CD4-positive, alpha-beta T cell (primary cell): ENCODE measurements at regions of chr17 and their contacts with region 1.

Region 1: GRCh38 chr17:75430159-75430974 is 24.9 kb upstream of the GRB2 start:
- DNase-seq: no peak
- ATAC-seq: no peak
- H3K4me3 ChIP-seq: no peak overlapping the region
- H3K4me3 Mint-ChIP-seq: no peak overlapping the region
- H3K27ac ChIP-seq: no peak overlapping the region
- H3K27ac Mint-ChIP-seq: no peak overlapping the region
- H3K4me1 ChIP-seq: peaks cover 12% of the 10 kb centered on the region
- H3K4me1 Mint-ChIP-seq: peaks cover 16% of the 10 kb centered on the region
- H3K27me3 ChIP-seq: no peaks in the 10 kb centered on the region
- H3K27me3 Mint-ChIP-seq: peaks cover 6% of the 10 kb centered on the region
- CTCF ChIP-seq: no peak

Region 2: DNA sequence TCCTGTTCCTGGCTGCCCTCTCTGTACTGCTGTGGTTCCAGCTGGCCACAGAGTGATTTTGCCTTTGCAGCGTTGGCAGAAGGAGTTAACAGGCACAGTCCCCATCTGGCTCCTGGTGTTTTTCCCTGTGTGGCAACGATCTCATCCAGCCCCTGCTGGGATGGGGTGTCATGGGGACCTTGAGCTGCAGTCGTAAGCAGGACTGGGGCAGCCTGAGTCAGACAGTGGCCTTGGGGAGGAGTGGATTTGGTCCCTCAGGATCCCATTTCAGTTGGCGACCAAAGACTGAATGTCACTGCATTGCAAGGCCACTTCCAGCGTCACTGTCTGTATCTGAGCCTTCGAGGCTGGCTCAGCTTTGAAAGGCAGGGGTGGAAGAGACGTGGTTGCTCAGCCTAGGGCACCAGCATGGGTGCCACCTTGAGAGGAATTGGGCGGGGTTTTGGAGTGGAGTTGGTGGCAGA is 38.0 kb after region 1 on chr17:
- CTCF ChIA-PET with region 1: no interaction called
- POLR2A ChIA-PET with region 1: no interaction called
- intact Hi-C with region 1: no loop called
- DNase-seq: no peak
- ATAC-seq: no peak
- H3K4me3 ChIP-seq: no peak overlapping the region
- H3K4me3 Mint-ChIP-seq: no peak overlapping the region
- H3K27ac ChIP-seq: no peak overlapping the region
- H3K27ac Mint-ChIP-seq: no peak overlapping the region
- H3K4me1 ChIP-seq: no peaks in the 10 kb centered on the region
- H3K4me1 Mint-ChIP-seq: peaks cover 9% of the 10 kb centered on the region
- H3K27me3 ChIP-seq: no peaks in the 10 kb centered on the region
- H3K27me3 Mint-ChIP-seq: no peaks in the 10 kb centered on the region
- CTCF ChIP-seq: no peak

Region 3: GRCh38 chr17:75524953-75525719 is 94.8 kb after region 1 on chr17 and contains the start of gene LLGL2:
- CTCF ChIA-PET with region 1: no interaction called
- POLR2A ChIA-PET with region 1: no interaction called
- intact Hi-C with region 1: no loop called
- DNase-seq: peak; percentile 68 to 96 (median 84)
- ATAC-seq: peak; percentile 91
- H3K4me3 ChIP-seq: peak within 1 kb of the TSS; percentile 64
- H3K4me3 Mint-ChIP-seq: peak within 1 kb of the TSS; percentile 82
- H3K27ac ChIP-seq: no peak within 1 kb of the TSS
- H3K27ac Mint-ChIP-seq: no peak within 1 kb of the TSS
- H3K4me1 ChIP-seq: peaks cover 28% of the 10 kb centered on the region
- H3K4me1 Mint-ChIP-seq: peaks cover 24% of the 10 kb centered on the region
- H3K27me3 ChIP-seq: no peaks in the 10 kb centered on the region
- H3K27me3 Mint-ChIP-seq: no peaks in the 10 kb centered on the region
- CTCF ChIP-seq: peak; percentile 44
- total RNA-seq, gene LLGL2: 31.2 to 34.2 TPM

Region 4: DNA sequence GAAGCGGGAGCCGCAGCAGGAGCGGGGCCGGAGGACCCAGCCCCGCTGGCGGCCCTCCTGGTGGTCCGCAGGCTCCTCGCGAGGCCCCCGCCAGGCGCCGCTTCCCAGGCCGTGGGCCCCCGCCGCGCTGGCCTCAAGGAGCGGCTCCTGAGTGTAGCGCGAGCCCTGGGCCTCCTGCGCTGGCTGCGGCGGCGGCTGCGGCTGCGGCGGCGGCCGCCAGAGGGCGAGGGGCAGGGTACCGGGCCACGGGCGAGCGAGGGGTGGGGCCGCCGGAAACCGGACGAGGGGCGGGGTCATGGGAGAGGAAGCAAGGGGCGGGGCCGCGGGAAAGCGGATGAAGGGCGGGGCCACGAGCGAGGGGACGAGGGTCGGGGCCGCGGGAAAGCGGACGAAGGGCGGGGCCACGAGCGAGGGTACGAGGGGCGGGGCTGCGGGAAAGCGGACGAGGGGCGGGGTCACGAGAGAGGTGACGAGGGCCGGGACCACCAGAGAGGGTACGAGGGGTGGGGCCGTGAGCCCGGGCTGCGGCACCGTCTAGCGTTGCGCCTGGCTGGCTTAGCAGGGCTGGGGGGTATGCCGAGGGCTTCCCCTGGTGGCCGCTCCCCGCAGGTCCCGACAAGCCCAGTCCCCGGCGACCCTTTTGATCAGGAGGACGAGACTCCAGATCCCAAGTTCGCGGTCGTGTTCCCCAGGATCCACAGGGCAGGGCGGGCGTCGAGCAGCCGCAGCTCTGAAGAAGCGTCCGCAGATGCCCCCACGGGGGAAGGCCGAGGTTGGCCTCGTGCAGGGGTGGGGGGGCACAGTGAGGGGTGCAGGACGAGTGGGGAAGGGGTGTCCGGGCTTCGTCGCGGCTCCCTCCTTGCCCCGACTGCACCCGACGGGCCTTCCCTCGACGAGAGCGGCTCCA is 158.9 kb after region 1 on chr17:
- CTCF ChIA-PET with region 1: no interaction called
- POLR2A ChIA-PET with region 1: interaction called, 3 read pairs
- intact Hi-C with region 1: loop called (anchors 2 kb)
- DNase-seq: peak; percentile 91 to 99 (median 96)
- ATAC-seq: peak; percentile 88
- H3K4me3 ChIP-seq: peak overlapping the region; percentile 66
- H3K4me3 Mint-ChIP-seq: peak overlapping the region; percentile 81
- H3K27ac ChIP-seq: peak overlapping the region in 1 of 2 donors; percentile 56
- H3K27ac Mint-ChIP-seq: no peak overlapping the region
- H3K4me1 ChIP-seq: peaks cover 32% of the 10 kb centered on the region
- H3K4me1 Mint-ChIP-seq: peaks cover 11% of the 10 kb centered on the region
- H3K27me3 ChIP-seq: no peaks in the 10 kb centered on the region
- H3K27me3 Mint-ChIP-seq: no peaks in the 10 kb centered on the region
- CTCF ChIP-seq: peak; percentile 57

Region 5: DNA sequence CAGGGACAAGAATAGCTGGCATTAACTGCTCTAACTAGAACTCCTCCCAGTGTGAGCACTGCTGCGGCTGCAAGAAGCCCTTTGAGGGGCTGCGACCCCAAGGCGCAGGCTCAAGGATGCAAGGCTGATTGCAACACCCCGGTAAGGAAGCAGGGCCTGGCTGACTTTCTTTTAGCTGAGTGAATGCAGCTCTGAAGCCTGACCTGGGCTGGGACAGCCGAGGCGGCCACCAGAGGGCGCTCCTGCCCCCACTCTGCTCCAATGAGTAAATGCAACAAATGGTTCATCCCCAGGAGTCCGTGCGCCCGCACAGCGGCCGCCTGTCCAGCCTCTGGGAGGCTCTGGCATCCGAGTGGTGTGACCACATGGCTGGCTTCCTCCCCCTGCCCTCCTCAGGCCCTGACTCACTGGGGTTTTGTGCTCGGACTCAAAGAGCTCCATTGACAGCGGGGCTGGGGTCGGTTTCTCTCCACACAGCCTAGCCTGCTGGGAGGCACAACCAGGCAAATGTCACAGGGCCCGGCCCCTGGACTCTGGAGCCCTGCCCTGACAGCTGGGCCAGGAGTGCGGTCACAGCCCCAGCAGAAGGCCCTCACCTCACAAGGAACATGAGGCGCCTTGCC is 202.6 kb after region 1 on chr17 and contains the start of gene SMIM5:
- CTCF ChIA-PET with region 1: interaction called, 7 read pairs
- POLR2A ChIA-PET with region 1: no interaction called
- intact Hi-C with region 1: loop called (anchors 1 kb)
- DNase-seq: peak; percentile 71 to 91 (median 80)
- ATAC-seq: peak; percentile 86
- H3K4me3 ChIP-seq: no peak within 1 kb of the TSS
- H3K4me3 Mint-ChIP-seq: no peak within 1 kb of the TSS
- H3K27ac ChIP-seq: no peak within 1 kb of the TSS
- H3K27ac Mint-ChIP-seq: no peak within 1 kb of the TSS
- H3K4me1 ChIP-seq: peaks cover 17% of the 10 kb centered on the region
- H3K4me1 Mint-ChIP-seq: peaks cover 13% of the 10 kb centered on the region
- H3K27me3 ChIP-seq: no peaks in the 10 kb centered on the region
- H3K27me3 Mint-ChIP-seq: no peaks in the 10 kb centered on the region
- CTCF ChIP-seq: peak; percentile 81
- total RNA-seq, gene SMIM5: 0.75 to 1.3 TPM